CD4-positive, alpha-beta T cell (primary cell): ENCODE measurements at regions of chr9 and their contacts with region 1.

Region 1: DNA sequence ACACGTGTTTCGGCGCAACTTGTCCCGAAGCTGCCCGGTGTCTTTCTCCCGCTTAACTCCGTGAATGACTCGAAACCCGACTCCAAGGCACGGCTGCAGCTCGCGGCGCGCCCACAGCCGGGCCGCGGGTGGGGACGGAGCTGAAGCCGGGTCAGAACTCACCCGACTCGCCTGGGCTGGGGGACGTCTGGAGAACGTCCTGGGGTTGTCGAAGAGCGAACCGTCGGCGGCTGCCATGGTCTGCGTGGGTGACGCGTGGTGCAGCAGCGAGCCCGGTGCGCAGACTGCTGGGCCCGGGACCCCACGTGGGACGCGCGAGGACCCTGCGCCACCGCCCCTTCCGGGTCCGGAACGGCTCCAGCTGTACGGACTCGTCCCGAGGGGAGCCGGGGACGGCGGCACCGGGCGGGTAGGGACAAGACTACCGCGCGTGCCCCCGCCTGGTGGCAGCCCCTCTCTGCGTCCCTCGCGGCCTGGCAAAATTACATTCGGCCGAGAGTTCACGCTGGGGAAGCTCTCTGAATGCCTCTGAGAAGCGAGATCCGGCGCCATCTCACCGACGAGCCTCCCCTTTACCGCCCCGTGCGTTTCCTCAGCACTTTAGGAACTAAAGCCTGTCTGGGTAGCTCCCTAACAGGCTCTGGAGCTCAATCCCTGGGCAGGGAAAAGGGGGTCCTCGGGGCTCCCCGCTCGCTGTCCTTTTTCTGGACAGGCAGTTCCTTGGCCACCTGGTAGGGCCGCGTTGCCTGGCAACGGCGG is at the start of gene DDX31:
- DNase-seq: peak; percentile 78 to 94 (median 84)
- ATAC-seq: peak; percentile 77
- H3K4me3 ChIP-seq: peak within 1 kb of the TSS; percentile 100
- H3K4me3 Mint-ChIP-seq: peak within 1 kb of the TSS; percentile 98
- H3K27ac ChIP-seq: peak within 1 kb of the TSS; percentile 97 to 99
- H3K27ac Mint-ChIP-seq: peak within 1 kb of the TSS; percentile 92
- H3K4me1 ChIP-seq: peaks cover 32% of the 10 kb centered on the region
- H3K4me1 Mint-ChIP-seq: peaks cover 54% of the 10 kb centered on the region
- H3K27me3 ChIP-seq: no peaks in the 10 kb centered on the region
- H3K27me3 Mint-ChIP-seq: no peaks in the 10 kb centered on the region
- CTCF ChIP-seq: no peak
- total RNA-seq, gene DDX31: 11.0 to 11.3 TPM

Region 2: DNA sequence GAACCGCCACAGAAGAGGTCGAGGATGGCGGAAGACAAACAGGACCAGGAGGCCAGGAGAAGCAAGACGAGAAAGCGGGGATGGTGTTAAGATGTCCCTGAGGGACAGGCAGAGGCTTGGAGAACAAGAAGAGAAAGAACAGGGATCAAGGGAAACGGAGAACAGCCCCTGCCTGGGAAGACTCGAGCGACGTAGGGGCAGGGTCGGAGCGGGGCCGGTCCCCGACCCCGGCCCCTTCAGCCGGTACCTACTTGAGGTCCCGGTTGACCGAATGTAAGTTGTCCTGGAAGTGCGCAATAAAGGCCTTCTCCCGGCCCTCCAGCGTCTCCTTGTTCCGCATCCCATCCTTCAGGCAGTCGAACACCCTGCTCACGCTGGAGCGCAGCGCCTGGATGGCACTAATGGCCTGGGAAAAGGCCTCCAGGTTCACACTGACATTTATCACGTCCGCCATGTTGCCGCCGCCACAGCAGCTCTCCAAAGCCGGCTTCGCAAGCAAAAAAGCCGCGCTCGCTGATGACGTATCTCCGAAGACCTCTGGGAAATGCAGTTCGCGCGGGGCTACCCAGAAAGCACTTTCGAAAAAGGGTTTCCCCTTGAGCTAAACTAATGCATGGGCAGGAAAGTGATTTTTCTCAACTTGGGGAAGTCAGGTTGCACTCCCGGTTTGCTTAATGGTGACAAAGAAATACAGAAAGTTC is 590.3 kb before region 1 on chr9 and contains the start of gene MED27:
- CTCF ChIA-PET with region 1: no interaction called
- POLR2A ChIA-PET with region 1: interaction called, 4 read pairs
- intact Hi-C with region 1: loop called in 1 of 2 experiments (anchors 1 kb)
- DNase-seq: peak; percentile 81 to 96 (median 92)
- ATAC-seq: peak; percentile 98
- H3K4me3 ChIP-seq: peak within 1 kb of the TSS; percentile 88
- H3K4me3 Mint-ChIP-seq: peak within 1 kb of the TSS; percentile 91
- H3K27ac ChIP-seq: peak within 1 kb of the TSS in 1 of 2 donors; percentile 11
- H3K27ac Mint-ChIP-seq: peak within 1 kb of the TSS; percentile 68
- H3K4me1 ChIP-seq: peaks cover 19% of the 10 kb centered on the region
- H3K4me1 Mint-ChIP-seq: peaks cover 47% of the 10 kb centered on the region
- H3K27me3 ChIP-seq: peaks cover 0 to 2% of the 10 kb centered on the region in 2 experiments
- H3K27me3 Mint-ChIP-seq: peaks cover 11% of the 10 kb centered on the region
- CTCF ChIP-seq: no peak
- total RNA-seq, gene MED27: 15.0 to 17.4 TPM

Region 3: GRCh38 chr9:132768932-132769905 is 99.3 kb after region 1 on chr9:
- CTCF ChIA-PET with region 1: no interaction called
- POLR2A ChIA-PET with region 1: interaction called, 21 read pairs
- intact Hi-C with region 1: loop called in 1 of 2 experiments (anchors 5 kb)
- DNase-seq: peak; percentile 46 to 85 (median 58)
- ATAC-seq: peak; percentile 80
- H3K4me3 ChIP-seq: peak overlapping the region; percentile 92
- H3K4me3 Mint-ChIP-seq: peak overlapping the region; percentile 99
- H3K27ac ChIP-seq: peak overlapping the region; percentile 55 to 84
- H3K27ac Mint-ChIP-seq: peak overlapping the region; percentile 89
- H3K4me1 ChIP-seq: peaks cover 16% of the 10 kb centered on the region
- H3K4me1 Mint-ChIP-seq: peaks cover 40% of the 10 kb centered on the region
- H3K27me3 ChIP-seq: no peaks in the 10 kb centered on the region
- H3K27me3 Mint-ChIP-seq: no peaks in the 10 kb centered on the region
- CTCF ChIP-seq: peak; percentile 70

Region 4: DNA sequence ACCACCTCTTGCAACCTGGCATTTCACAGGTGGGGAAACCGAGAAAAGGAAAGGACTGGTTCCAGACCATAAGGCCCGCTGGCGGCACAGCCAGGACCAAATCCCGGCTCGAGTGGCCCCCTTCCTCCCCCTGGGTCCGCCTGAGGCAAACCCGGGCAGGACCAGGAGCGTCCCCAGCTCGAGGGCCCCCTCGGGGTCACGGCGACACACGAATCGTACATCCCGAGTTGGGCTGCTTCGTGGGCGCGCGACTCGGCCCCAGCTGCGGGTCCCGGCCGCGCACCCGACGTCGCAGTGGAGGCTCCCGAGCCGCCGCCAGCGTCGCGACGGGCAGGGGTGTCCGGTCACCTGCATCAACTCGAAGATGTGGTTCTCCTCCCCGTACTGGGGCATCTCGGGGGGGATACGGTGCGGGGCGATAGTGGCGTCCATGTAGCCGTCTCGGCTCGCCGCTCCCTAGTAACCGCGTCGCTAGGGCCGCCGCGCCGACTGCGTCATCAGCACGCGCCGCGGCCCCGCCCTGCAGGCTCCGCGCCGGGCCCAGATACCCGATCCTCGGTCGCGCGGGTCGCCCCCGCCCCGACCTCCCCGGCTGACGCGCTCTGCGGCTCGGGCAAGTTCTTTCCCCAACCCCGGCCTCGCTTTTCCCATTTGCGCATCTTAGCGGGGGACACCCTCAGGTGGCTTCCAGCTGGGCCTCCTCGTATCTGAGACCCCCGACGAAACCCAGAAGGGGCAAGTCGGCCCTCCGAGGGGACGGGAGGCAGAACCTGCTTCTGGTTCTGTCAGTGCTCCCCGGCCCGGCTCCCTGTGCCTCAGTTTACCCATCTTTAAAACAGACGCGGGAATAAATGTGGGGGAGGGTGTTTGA is 208.2 kb after region 1 on chr9 and contains the start of gene AK8:
- CTCF ChIA-PET with region 1: no interaction called
- POLR2A ChIA-PET with region 1: interaction called, 6 read pairs
- intact Hi-C with region 1: loop called in 1 of 2 experiments (anchors 2 kb)
- DNase-seq: peak; percentile 54 to 91 (median 69)
- ATAC-seq: peak; percentile 86
- H3K4me3 ChIP-seq: peak within 1 kb of the TSS; percentile 98
- H3K4me3 Mint-ChIP-seq: peak within 1 kb of the TSS; percentile 93
- H3K27ac ChIP-seq: peak within 1 kb of the TSS in 1 of 2 donors; percentile 44
- H3K27ac Mint-ChIP-seq: peak within 1 kb of the TSS; percentile 90
- H3K4me1 ChIP-seq: peaks cover 25% of the 10 kb centered on the region
- H3K4me1 Mint-ChIP-seq: peaks cover 13% of the 10 kb centered on the region
- H3K27me3 ChIP-seq: no peaks in the 10 kb centered on the region
- H3K27me3 Mint-ChIP-seq: no peaks in the 10 kb centered on the region
- CTCF ChIP-seq: no peak
- total RNA-seq, gene AK8: not detected

Region 5: DNA sequence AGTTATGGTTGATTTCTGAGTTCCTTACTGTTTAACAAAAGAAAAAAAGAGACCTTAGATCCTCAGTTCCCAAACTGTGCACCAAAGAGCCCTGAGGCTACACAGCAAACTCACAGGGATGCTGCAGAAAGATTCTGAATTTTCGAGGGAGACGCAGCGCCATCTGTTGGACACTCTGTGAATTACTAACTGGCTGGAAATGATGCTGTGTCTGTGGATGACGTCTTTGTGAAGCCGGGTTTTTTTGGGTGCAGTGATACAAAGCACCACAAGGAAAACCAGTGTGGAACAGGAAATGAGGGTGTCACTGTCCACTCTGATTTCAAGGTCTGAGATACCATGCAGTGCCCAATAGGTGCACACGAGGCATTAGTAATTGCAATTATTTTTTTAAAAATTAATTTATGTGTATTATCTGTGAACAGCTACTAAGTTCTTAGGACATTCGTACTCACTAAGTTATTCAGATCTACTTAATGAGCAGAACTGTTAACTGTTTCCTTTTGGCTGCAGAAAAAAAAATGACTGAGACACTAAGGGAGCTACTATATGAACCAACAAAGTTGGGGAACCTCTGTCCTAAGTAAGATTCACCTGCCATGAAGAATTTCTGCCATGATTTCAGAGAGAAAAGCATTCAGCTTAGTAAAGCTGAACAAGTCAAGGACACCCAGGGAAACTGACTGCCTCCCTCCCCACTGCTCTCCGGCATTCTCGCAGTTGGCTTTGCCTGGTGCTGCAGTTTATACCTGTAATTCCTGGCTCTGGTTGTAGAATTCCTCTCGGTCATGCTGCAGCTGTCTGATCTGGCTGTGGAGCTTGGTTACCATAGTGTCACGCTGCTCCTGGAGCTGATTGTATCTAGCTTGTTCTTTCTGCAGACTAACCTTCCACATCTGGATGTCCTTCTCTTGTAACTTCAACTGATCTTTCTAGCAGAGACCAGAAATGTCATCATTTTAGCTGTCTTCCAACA is 232.3 kb after region 1 on chr9:
- CTCF ChIA-PET with region 1: no interaction called
- POLR2A ChIA-PET with region 1: no interaction called
- intact Hi-C with region 1: loop called in 1 of 2 experiments (anchors 10 kb)
- DNase-seq: peak; percentile 58 to 91 (median 76)
- ATAC-seq: peak; percentile 99
- H3K4me3 ChIP-seq: no peak overlapping the region
- H3K4me3 Mint-ChIP-seq: no peak overlapping the region
- H3K27ac ChIP-seq: no peak overlapping the region
- H3K27ac Mint-ChIP-seq: peak overlapping the region; percentile 70
- H3K4me1 ChIP-seq: no peaks in the 10 kb centered on the region
- H3K4me1 Mint-ChIP-seq: peaks cover 5% of the 10 kb centered on the region
- H3K27me3 ChIP-seq: no peaks in the 10 kb centered on the region
- H3K27me3 Mint-ChIP-seq: no peaks in the 10 kb centered on the region
- CTCF ChIP-seq: peak; percentile 97